CD8-positive, alpha-beta memory T cell (primary cell): ENCODE measurements at regions of chr2 and their contacts with region 1.

Region 1: GRCh38 chr2:136384531-136385303 is 266.8 kb upstream of the CXCR4 start:
- DNase-seq: peak; percentile 12 to 68 (median 53)
- H3K4me3 ChIP-seq: no peak overlapping the region
- H3K4me3 Mint-ChIP-seq: peak overlapping the region in 1 of 7 donors; percentile 43
- H3K27ac ChIP-seq: no peak overlapping the region
- H3K27ac Mint-ChIP-seq: peak overlapping the region in 7 of 8 donors; percentile 11 to 97 (median 93)
- H3K4me1 ChIP-seq: peaks cover 25% of the 10 kb centered on the region
- H3K4me1 Mint-ChIP-seq: peaks cover 32 to 37% (median 36%) of the 10 kb centered on the region in 3 donors
- H3K27me3 ChIP-seq: no peaks in the 10 kb centered on the region
- H3K27me3 Mint-ChIP-seq: peaks cover 0 to 3% of the 10 kb centered on the region in 2 donors

Region 2: DNA sequence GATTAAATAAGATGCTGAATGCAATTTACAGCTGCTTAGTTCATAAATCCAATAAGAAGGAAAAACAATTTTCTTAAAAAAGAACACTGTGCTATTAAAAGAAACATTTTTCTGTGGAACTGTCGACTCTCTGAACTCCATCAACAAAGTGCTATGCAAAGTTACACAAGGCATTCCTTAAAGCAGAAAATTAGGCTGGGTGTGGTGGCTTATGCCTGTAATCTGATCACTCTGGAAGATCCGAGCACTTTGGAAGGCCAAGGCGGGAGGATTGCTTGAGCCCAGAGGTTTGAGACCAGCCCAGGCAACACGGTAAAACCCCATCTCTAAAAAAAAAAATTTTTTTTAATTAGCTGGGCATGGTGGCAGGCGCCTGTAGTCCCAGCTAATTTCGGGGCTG is 521.5 kb before region 1 on chr2:
- CTCF ChIA-PET with region 1: no interaction called
- POLR2A ChIA-PET with region 1: no interaction called
- DNase-seq: no peak
- H3K4me3 ChIP-seq: no peak overlapping the region
- H3K4me3 Mint-ChIP-seq: no peak overlapping the region
- H3K27ac ChIP-seq: no peak overlapping the region
- H3K27ac Mint-ChIP-seq: peak overlapping the region in 1 of 8 donors; percentile 22
- H3K4me1 ChIP-seq: no peaks in the 10 kb centered on the region
- H3K4me1 Mint-ChIP-seq: peaks cover 2 to 8% (median 8%) of the 10 kb centered on the region in 3 donors
- H3K27me3 ChIP-seq: no peaks in the 10 kb centered on the region
- H3K27me3 Mint-ChIP-seq: no peaks in the 10 kb centered on the region

Region 3: DNA sequence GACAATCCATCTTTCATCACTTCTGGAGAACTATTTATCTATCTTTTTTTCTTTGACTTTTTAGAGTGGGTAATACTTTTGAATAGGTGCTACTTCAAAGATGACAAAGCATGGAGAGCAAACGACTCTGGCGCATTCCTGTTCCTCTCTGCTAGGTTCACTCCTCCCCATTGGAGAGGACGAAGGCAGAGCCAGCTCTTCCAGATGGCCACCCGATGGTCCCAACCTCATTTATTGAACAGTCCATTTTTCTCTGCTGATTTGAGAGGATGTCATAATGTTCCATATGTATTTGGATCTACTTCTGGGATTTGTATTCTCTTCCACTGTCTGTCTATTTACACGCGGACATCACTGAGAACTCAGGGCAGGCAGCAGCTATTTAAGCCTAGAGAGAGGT is 17.6 kb after region 1 on chr2:
- CTCF ChIA-PET with region 1: interaction called, 10 read pairs
- POLR2A ChIA-PET with region 1: no interaction called
- DNase-seq: no peak
- H3K4me3 ChIP-seq: no peak overlapping the region
- H3K4me3 Mint-ChIP-seq: no peak overlapping the region
- H3K27ac ChIP-seq: no peak overlapping the region
- H3K27ac Mint-ChIP-seq: no peak overlapping the region
- H3K4me1 ChIP-seq: no peaks in the 10 kb centered on the region
- H3K4me1 Mint-ChIP-seq: no peaks in the 10 kb centered on the region
- H3K27me3 ChIP-seq: peaks cover 8% of the 10 kb centered on the region
- H3K27me3 Mint-ChIP-seq: peaks cover 15 to 63% of the 10 kb centered on the region in 2 donors